ENCODE measurements at regions of chr3 and their contacts with region 1.

Region 1: GRCh38 chr3:124928333-124929202 is 6.0 kb downstream of the MUC13 start:
- DNase-seq: peak; percentile 76
- H3K4me3 ChIP-seq: no peak overlapping the region
- H3K27ac ChIP-seq: no peak overlapping the region
- H3K4me1 ChIP-seq: no peaks in the 10 kb centered on the region
- H3K27me3 ChIP-seq: no peaks in the 10 kb centered on the region
- CTCF ChIP-seq: peak; percentile 42

Region 2: GRCh38 chr3:124986158-124987143 is 57.9 kb after region 1 on chr3:
- intact Hi-C with region 1: loop called (anchors 2 kb)
- DNase-seq: peak; percentile 70
- H3K4me3 ChIP-seq: no peak overlapping the region
- H3K27ac ChIP-seq: peak overlapping the region; percentile 51
- H3K4me1 ChIP-seq: peaks cover 5% of the 10 kb centered on the region
- H3K27me3 ChIP-seq: no peaks in the 10 kb centered on the region
- CTCF ChIP-seq: peak; percentile 58

Region 3: GRCh38 chr3:125165189-125165947 is 236.8 kb after region 1 on chr3:
- intact Hi-C with region 1: loop called (anchors 10 kb)
- DNase-seq: no peak
- H3K4me3 ChIP-seq: no peak overlapping the region
- H3K27ac ChIP-seq: peak overlapping the region; percentile 74
- H3K4me1 ChIP-seq: peaks cover 11% of the 10 kb centered on the region
- H3K27me3 ChIP-seq: no peaks in the 10 kb centered on the region
- CTCF ChIP-seq: peak; percentile 41

Measured in colonic mucosa (tissue), 4 donors.